Prostate gland (tissue), 2 donors: ENCODE measurements at regions of chr2 and their contacts with region 1.

Region 1: DNA sequence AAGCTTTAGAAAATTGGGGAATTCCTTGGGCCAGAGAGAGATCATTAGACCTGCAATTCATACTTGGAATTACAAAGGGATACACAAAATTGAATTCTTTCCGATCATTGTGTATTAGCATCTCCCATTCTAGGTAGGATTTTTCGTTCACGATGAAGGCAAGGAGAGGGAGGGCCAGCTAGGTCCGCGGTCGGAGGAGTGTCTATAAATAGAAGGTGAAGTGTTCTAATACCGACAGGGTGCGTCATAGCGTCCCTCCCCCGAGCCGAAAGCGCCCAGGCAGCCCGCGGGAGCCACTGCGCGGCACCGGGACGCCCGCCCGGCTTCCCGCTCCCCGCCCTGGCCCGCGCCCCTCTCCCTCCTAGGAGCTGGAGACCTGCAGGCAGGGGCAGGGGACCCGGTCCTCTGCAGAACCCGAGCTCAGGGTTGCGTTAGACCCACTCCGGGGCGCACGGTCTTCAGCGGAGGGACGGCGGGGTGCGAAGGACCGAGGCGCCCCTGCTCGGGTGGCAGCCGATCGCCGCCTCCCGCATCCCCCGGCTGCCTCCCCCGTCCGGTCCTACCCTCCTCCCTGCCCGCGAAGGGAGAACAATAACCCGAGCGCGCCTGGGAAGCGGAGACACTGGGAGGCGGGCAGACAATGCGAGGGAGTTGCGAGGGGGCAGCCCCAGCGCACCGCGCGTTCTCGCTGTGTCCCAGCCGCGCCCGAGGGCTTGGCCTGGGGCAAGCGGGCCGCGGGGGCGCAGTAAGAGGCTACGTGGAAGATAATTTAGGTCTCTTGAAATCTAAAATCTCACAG is 114.2 kb upstream of the SERTAD2 start:
- DNase-seq: peak; percentile 92
- H3K4me3 ChIP-seq: peak overlapping the region; percentile 75 to 77
- H3K27ac ChIP-seq: peak overlapping the region; percentile 93 to 96
- H3K4me1 ChIP-seq: no peaks in the 10 kb centered on the region
- H3K27me3 ChIP-seq: no peaks in the 10 kb centered on the region
- CTCF ChIP-seq: peak in 1 of 4 experiments; percentile 26
- POLR2A ChIP-seq: peak; percentile 80

Region 2: GRCh38 chr2:64605026-64605471 is 162.8 kb before region 1 on chr2:
- intact Hi-C with region 1: no loop called
- DNase-seq: peak; percentile 35
- H3K4me3 ChIP-seq: no peak overlapping the region
- H3K27ac ChIP-seq: no peak overlapping the region
- H3K4me1 ChIP-seq: peaks cover 8% of the 10 kb centered on the region
- H3K27me3 ChIP-seq: no peaks in the 10 kb centered on the region
- CTCF ChIP-seq: no peak
- POLR2A ChIP-seq: no peak

Region 3: GRCh38 chr2:64622443-64623241 is 145.2 kb before region 1 on chr2:
- intact Hi-C with region 1: no loop called
- DNase-seq: no peak
- H3K4me3 ChIP-seq: no peak overlapping the region
- H3K27ac ChIP-seq: no peak overlapping the region
- H3K4me1 ChIP-seq: no peaks in the 10 kb centered on the region
- H3K27me3 ChIP-seq: no peaks in the 10 kb centered on the region
- CTCF ChIP-seq: no peak
- POLR2A ChIP-seq: no peak

Region 4: GRCh38 chr2:64859312-64860212 is 91.7 kb after region 1 on chr2:
- intact Hi-C with region 1: loop called (anchors 5 kb)
- DNase-seq: peak; percentile 87
- H3K4me3 ChIP-seq: peak overlapping the region; percentile 30 to 40
- H3K27ac ChIP-seq: peak overlapping the region; percentile 75 to 84
- H3K4me1 ChIP-seq: peaks cover 8% of the 10 kb centered on the region
- H3K27me3 ChIP-seq: no peaks in the 10 kb centered on the region
- CTCF ChIP-seq: no peak
- POLR2A ChIP-seq: no peak

Region 5: DNA sequence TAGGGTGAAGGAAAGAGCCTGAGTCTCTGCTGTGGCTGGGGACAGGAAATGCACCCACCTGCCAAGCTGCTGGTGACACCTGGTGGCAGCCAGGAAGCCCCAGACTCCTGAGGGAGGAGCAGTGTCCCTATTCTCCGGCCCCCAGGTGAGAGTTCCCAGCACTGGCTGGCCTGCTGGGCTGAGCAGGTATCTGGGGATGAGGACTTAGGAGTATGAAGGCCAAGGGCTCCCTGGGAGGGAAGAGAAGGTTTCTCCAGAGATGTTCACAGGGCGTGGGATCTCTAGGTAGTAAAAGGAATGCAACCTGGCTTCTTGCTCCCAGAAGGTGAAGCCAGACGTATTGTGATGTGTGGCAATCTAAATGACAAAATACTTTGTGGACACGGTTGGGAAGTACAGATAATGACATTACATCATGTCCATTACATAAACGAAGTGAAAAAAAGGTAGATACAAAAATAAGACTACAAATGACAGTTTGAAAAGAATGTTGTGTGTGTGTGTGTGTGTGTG is 145.5 kb after region 1 on chr2:
- intact Hi-C with region 1: no loop called
- DNase-seq: no peak
- H3K4me3 ChIP-seq: no peak overlapping the region
- H3K27ac ChIP-seq: no peak overlapping the region
- H3K4me1 ChIP-seq: no peaks in the 10 kb centered on the region
- H3K27me3 ChIP-seq: no peaks in the 10 kb centered on the region
- CTCF ChIP-seq: peak in 2 of 4 experiments; percentile 3 to 50
- POLR2A ChIP-seq: no peak